Right lobe of liver (tissue), 6 donors: ENCODE measurements at regions of chr5 and their contacts with region 1.

Region 1: GRCh38 chr5:74640450-74640953 is at the start of gene ENC1:
- DNase-seq: peak; percentile 91 to 94 (median 94)
- ATAC-seq: peak; percentile 78 to 88 (median 84)
- H3K4me3 ChIP-seq: peak within 1 kb of the TSS; percentile 79 to 88 (median 79)
- H3K27ac ChIP-seq: peak within 1 kb of the TSS; percentile 90 to 92 (median 91)
- H3K4me1 ChIP-seq: peaks cover 0 to 15% (median 0%) of the 10 kb centered on the region in 4 donors
- H3K27me3 ChIP-seq: no peaks in the 10 kb centered on the region
- CTCF ChIP-seq: peak; percentile 40 to 75 (median 49)
- POLR2A ChIP-seq: peak; percentile 86
- total RNA-seq, gene ENC1: 4.5 to 6.8 (median 5.5) TPM

Region 2: DNA sequence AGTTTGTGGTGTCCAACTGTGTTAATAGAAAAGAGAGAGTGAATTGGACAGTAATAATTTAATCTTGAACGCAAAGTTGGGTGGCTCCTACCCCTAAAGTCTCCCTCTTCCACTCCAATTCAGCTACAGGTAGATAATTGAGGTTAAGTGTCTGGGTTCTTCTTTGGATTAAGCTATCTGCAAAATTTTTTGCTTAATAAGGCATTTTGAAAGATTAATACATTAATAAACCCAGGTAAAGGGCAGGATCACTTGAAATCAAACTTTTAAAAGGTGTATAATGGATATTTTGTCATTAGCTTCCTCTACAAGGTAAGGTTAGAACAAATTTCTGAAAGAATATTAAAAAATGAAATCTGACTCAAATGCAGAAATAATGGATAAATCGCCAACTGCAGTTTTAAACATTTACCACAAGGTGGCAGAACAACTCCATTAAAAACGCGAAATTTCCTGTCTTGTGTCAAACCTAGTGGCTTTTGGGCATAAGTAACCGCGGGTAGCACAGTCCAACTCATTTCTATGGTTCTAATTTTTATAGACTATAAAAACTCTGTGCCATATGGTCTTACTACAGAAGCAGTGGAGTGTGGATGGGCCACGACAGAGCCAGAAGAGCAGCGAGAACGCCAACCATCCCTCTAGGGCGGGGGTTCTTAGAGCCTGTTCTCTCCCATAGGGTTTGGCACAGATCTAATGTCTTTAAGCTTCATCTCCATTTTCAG is 738.0 kb before region 1 on chr5:
- intact Hi-C with region 1: loop called (anchors 5 to 10 kb)
- DNase-seq: no peak
- ATAC-seq: peak; percentile 58 to 72 (median 61)
- H3K4me3 ChIP-seq: no peak overlapping the region
- H3K27ac ChIP-seq: peak overlapping the region; percentile 3 to 52 (median 39)
- H3K4me1 ChIP-seq: peaks cover 0 to 24% (median 8%) of the 10 kb centered on the region in 4 donors
- H3K27me3 ChIP-seq: no peaks in the 10 kb centered on the region
- CTCF ChIP-seq: peak; percentile 81 to 97 (median 84)
- POLR2A ChIP-seq: no peak

Region 3: DNA sequence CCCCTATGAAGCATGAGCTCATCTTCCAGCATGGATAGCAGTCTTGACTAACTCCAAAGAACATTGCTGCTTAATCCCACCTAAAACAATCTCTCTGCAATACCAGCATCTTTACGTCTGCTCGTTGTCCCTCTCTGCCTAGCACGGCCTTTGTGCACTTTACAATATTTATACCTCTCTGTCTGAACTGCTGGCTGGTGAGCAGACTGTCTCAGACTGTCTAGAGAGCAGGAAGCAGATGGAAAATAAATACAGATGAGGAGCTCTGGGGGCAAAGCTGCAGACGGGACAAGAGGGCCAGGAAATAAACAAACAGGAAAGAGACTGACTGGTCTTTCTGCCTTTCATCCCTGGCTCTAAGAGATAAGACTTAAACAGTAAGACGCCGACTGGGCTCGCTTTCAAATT is 224.8 kb before region 1 on chr5:
- intact Hi-C with region 1: loop called in 1 of 2 experiments (anchors 10 kb)
- DNase-seq: no peak
- ATAC-seq: peak; percentile 29 to 76 (median 36)
- H3K4me3 ChIP-seq: no peak overlapping the region
- H3K27ac ChIP-seq: no peak overlapping the region
- H3K4me1 ChIP-seq: peaks cover 0 to 15% (median 0%) of the 10 kb centered on the region in 4 donors
- H3K27me3 ChIP-seq: no peaks in the 10 kb centered on the region
- CTCF ChIP-seq: no peak
- POLR2A ChIP-seq: no peak

Region 4: GRCh38 chr5:74490811-74491210 is 149.7 kb before region 1 on chr5:
- intact Hi-C with region 1: no loop called
- DNase-seq: no peak
- ATAC-seq: no peak
- H3K4me3 ChIP-seq: no peak overlapping the region
- H3K27ac ChIP-seq: no peak overlapping the region
- H3K4me1 ChIP-seq: no peaks in the 10 kb centered on the region
- H3K27me3 ChIP-seq: no peaks in the 10 kb centered on the region
- CTCF ChIP-seq: no peak
- POLR2A ChIP-seq: no peak